ENCODE measurements at regions of chr4 and their contacts with region 1.

Region 1: GRCh38 chr4:169810325-169811323 is 52.9 kb upstream of the HPF1 start:
- DNase-seq: peak in 1 of 2 donors; percentile 3
- ATAC-seq: peak in 1 of 2 donors; percentile 66
- H3K4me3 ChIP-seq: no peak overlapping the region
- H3K27ac ChIP-seq: no peak overlapping the region
- H3K4me1 ChIP-seq: no peaks in the 10 kb centered on the region
- H3K27me3 ChIP-seq: no peaks in the 10 kb centered on the region
- CTCF ChIP-seq: peak; percentile 60 to 84 (median 69)
- POLR2A ChIP-seq: no peak

Region 2: GRCh38 chr4:169492438-169493163 is 318.0 kb before region 1 on chr4:
- in situ Hi-C with region 1: no loop called
- intact Hi-C with region 1: no loop called
- DNase-seq: no peak
- ATAC-seq: no peak
- H3K4me3 ChIP-seq: no peak overlapping the region
- H3K27ac ChIP-seq: no peak overlapping the region
- H3K4me1 ChIP-seq: no peaks in the 10 kb centered on the region
- H3K27me3 ChIP-seq: no peaks in the 10 kb centered on the region
- CTCF ChIP-seq: peak; percentile 34 to 65 (median 47)
- POLR2A ChIP-seq: no peak

Region 3: DNA sequence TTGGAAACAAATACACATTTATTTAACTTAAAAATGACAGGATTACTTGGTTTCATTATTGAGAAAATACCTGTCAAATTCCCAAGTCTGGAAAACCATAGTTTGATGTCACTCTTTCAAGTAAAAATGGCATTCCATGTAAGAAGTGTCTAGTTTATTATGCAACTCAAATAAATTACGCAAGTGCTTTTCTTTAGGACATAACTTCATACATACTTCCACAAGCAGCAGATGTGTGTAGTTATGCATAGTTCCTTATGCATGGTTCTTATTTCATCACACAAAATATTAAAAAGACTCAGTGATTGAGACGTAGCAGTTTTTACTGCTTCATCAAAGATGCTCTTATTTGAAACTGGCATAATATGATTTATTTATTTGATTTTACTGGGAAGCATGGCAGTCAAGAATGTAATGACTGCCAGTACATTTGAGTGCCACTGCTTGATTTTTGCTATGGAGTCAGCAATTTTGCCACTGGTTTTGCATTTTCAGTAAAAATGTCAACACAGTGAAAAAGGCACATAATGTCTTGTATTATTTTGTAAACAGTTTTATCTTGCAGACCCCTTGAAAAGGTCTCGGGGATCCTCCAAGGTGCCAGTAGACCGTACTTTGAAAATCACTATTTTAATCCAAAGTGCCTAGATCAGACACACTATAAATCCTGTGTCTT is 128.1 kb before region 1 on chr4:
- in situ Hi-C with region 1: no loop called
- intact Hi-C with region 1: no loop called
- DNase-seq: no peak
- ATAC-seq: no peak
- H3K4me3 ChIP-seq: no peak overlapping the region
- H3K27ac ChIP-seq: no peak overlapping the region
- H3K4me1 ChIP-seq: no peaks in the 10 kb centered on the region
- H3K27me3 ChIP-seq: no peaks in the 10 kb centered on the region
- CTCF ChIP-seq: no peak
- POLR2A ChIP-seq: no peak

Region 4: GRCh38 chr4:169881769-169882168 is 71.1 kb after region 1 on chr4:
- in situ Hi-C with region 1: no loop called
- intact Hi-C with region 1: no loop called
- DNase-seq: no peak
- ATAC-seq: no peak
- H3K4me3 ChIP-seq: no peak overlapping the region
- H3K27ac ChIP-seq: no peak overlapping the region
- H3K4me1 ChIP-seq: no peaks in the 10 kb centered on the region
- H3K27me3 ChIP-seq: no peaks in the 10 kb centered on the region
- CTCF ChIP-seq: no peak
- POLR2A ChIP-seq: no peak

Region 5: GRCh38 chr4:170040031-170040680 is 229.5 kb after region 1 on chr4:
- in situ Hi-C with region 1: loop called in 3 of 4 experiments (anchors 5 to 10 kb)
- intact Hi-C with region 1: no loop called
- DNase-seq: no peak
- ATAC-seq: no peak
- H3K4me3 ChIP-seq: no peak overlapping the region
- H3K27ac ChIP-seq: no peak overlapping the region
- H3K4me1 ChIP-seq: no peaks in the 10 kb centered on the region
- H3K27me3 ChIP-seq: no peaks in the 10 kb centered on the region
- CTCF ChIP-seq: no peak
- POLR2A ChIP-seq: no peak

Region 6: DNA sequence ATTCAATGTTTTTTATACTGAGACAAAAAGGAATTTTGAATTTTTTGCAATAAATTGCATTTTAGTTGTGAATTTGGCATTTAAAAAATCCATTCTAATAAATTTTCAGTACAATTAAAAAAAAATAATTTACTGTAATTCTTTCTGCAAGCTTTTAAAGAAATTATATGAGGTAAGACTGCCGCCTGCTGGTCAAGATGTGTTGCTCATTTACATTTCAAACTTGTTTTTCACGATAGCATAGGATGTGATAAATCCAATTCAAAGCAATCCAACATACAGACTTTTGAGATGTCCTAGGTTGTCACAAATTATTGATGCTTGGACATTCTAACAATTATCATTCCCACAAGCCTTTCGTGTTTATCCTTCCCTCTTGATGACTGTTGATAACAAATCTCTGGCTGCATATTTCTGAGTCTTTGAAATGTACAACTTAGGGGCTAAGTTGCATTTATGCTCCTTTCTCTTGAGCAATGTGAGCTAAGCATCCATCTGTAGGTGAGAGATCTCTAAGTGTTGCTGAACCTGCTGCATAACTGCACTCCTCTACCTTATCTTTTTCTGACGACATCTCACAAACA is 237.2 kb after region 1 on chr4:
- in situ Hi-C with region 1: loop called (anchors 5 to 10 kb)
- intact Hi-C with region 1: loop called (anchors 1 kb)
- DNase-seq: peak in 1 of 2 donors; percentile 15
- ATAC-seq: no peak
- H3K4me3 ChIP-seq: no peak overlapping the region
- H3K27ac ChIP-seq: no peak overlapping the region
- H3K4me1 ChIP-seq: no peaks in the 10 kb centered on the region
- H3K27me3 ChIP-seq: no peaks in the 10 kb centered on the region
- CTCF ChIP-seq: peak; percentile 67 to 80 (median 71)
- POLR2A ChIP-seq: no peak

Region 7: GRCh38 chr4:170089668-170090351 is 279.2 kb after region 1 on chr4 and contains the start of gene AADAT:
- in situ Hi-C with region 1: no loop called
- intact Hi-C with region 1: loop called (anchors 2 kb)
- DNase-seq: peak; percentile 32 to 61
- ATAC-seq: peak; percentile 86 to 90
- H3K4me3 ChIP-seq: peak within 1 kb of the TSS; percentile 46 to 66 (median 58)
- H3K27ac ChIP-seq: peak within 1 kb of the TSS in 3 of 4 donors; percentile 17 to 22 (median 17)
- H3K4me1 ChIP-seq: peaks cover 5 to 8% of the 10 kb centered on the region in 2 donors
- H3K27me3 ChIP-seq: no peaks in the 10 kb centered on the region
- CTCF ChIP-seq: peak; percentile 30 to 74 (median 66)
- POLR2A ChIP-seq: no peak
- total RNA-seq, gene AADAT: 0.33 to 1.4 (median 0.82) TPM

Measured in gastrocnemius medialis (tissue), 4 donors.